ENCODE measurements at regions of chrX and their contacts with region 1.

Region 1: DNA sequence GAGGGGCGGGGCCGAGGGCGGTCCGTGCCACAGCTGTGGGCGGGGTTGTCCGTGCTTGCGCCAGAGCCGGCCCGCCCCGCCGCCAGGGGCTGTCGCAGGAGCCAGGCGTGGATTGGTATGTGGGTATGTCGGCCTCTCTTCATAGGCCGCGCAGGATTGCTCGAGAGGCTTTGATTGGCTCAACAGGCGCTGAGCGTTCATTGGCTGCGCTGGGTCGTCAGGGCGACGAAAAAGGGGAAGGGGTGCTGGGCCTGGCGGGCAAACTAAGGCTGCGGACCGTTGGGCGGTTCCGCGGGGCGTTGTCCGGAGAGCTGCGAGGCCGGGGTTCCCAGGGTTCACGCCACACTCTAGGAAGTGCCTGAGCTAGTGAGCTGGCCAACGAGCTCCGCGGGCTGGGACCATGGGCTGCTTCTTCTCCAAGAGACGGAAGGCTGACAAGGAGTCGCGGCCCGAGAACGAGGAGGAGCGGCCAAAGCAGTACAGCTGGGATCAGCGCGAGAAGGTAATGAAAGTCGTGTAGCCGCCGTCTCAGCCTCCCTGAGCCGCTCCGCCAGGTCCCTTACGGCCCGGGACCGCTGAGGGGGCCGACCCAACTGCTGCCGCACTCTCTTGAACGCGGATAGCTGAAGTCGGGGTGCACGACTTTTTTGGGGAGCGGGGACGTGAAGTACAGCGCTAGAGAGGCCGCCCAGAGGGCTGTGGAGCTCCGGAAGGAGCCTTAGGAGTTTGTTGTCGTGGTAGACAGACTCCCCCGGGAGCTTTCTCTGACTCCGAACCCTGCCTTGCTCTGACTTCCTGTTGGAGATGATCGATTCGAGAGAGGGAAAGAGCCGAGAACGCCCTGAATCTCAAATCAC is at the start of gene RP2:
- DNase-seq: peak; percentile 77
- ATAC-seq: peak; percentile 93
- H3K4me3 Mint-ChIP-seq: peak within 1 kb of the TSS; percentile 95
- H3K27ac Mint-ChIP-seq: peak within 1 kb of the TSS; percentile 94
- H3K4me1 Mint-ChIP-seq: peaks cover 37% of the 10 kb centered on the region
- H3K27me3 Mint-ChIP-seq: no peaks in the 10 kb centered on the region
- CTCF ChIP-seq: no peak
- total RNA-seq, gene RP2: 11.3 TPM in 2 replicates

Region 2: GRCh38 chrX:47129157-47129898 is 292.4 kb after region 1 on chrX:
- CTCF ChIA-PET with region 1: no interaction called
- POLR2A ChIA-PET with region 1: no interaction called
- intact Hi-C with region 1: loop called (anchors 1 kb)
- DNase-seq: peak; percentile 76
- ATAC-seq: peak; percentile 98
- H3K4me3 Mint-ChIP-seq: peak overlapping the region; percentile 97
- H3K27ac Mint-ChIP-seq: peak overlapping the region; percentile 94
- H3K4me1 Mint-ChIP-seq: no peaks in the 10 kb centered on the region
- H3K27me3 Mint-ChIP-seq: no peaks in the 10 kb centered on the region
- CTCF ChIP-seq: no peak